ENCODE measurements at regions of chr17 and their contacts with region 1.

Region 1: GRCh38 chr17:7687908-7688807 is at the start of gene WRAP53:
- DNase-seq: peak; percentile 99
- H3K4me3 Mint-ChIP-seq: peak within 1 kb of the TSS; percentile 93
- H3K27ac Mint-ChIP-seq: peak within 1 kb of the TSS; percentile 97
- H3K4me1 Mint-ChIP-seq: peaks cover 24% of the 10 kb centered on the region
- H3K27me3 Mint-ChIP-seq: no peaks in the 10 kb centered on the region
- total RNA-seq, gene WRAP53: 33.8 and 35.0 TPM in 2 replicates

Region 2: GRCh38 chr17:7306911-7307686 is 381.1 kb before region 1 on chr17 and contains the start of gene EIF5A:
- intact Hi-C with region 1: loop called (anchors 1 kb)
- DNase-seq: peak; percentile 100
- H3K4me3 Mint-ChIP-seq: peak within 1 kb of the TSS; percentile 90
- H3K27ac Mint-ChIP-seq: peak within 1 kb of the TSS; percentile 99
- H3K4me1 Mint-ChIP-seq: peaks cover 40% of the 10 kb centered on the region
- H3K27me3 Mint-ChIP-seq: peaks cover 5% of the 10 kb centered on the region
- total RNA-seq, gene EIF5A: 1,303 and 1,327 TPM in 2 replicates

Region 3: GRCh38 chr17:7435221-7435675 is 252.9 kb before region 1 on chr17 and contains the start of gene TMEM102:
- intact Hi-C with region 1: loop called (anchors 1 kb)
- DNase-seq: peak; percentile 99
- H3K4me3 Mint-ChIP-seq: peak within 1 kb of the TSS; percentile 93
- H3K27ac Mint-ChIP-seq: peak within 1 kb of the TSS; percentile 98
- H3K4me1 Mint-ChIP-seq: peaks cover 31% of the 10 kb centered on the region
- H3K27me3 Mint-ChIP-seq: peaks cover 7% of the 10 kb centered on the region
- total RNA-seq, gene TMEM102: 12.8 and 12.9 TPM in 2 replicates

Region 4: DNA sequence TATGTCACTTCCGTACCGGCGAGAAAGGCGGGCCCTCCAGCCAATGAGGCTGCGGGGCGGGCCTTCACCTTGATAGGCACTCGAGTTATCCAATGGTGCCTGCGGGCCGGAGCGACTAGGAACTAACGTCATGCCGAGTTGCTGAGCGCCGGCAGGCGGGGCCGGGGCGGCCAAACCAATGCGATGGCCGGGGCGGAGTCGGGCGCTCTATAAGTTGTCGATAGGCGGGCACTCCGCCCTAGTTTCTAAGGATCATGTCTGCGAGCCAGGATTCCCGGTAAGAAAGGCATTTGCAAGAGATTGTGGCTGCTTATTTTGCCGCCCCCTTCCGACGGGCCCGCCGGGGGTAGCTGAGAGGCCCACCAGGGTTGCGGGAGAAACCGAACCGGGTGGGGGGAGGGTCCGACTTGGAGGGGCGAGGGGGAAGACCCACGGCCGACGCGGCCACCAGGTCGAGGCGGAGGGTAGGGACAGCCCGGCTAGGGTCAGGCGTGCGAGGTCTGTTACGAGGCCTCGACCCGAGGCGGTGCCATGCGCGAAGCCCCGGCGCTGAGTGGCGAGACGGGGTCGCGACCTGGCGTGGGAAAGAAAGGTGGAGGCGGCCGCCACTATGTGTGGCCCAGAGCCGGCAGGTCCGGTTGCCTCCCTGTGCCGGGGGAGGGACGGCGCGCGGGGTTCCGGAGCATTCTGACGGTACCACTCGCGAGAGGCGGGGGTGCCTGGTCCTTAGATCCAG is 115.4 kb before region 1 on chr17:
- intact Hi-C with region 1: loop called (anchors 1 kb)
- DNase-seq: peak; percentile 100
- H3K4me3 Mint-ChIP-seq: peak overlapping the region; percentile 95
- H3K27ac Mint-ChIP-seq: peak overlapping the region; percentile 100
- H3K4me1 Mint-ChIP-seq: peaks cover 55% of the 10 kb centered on the region
- H3K27me3 Mint-ChIP-seq: peaks cover 2% of the 10 kb centered on the region

Region 5: DNA sequence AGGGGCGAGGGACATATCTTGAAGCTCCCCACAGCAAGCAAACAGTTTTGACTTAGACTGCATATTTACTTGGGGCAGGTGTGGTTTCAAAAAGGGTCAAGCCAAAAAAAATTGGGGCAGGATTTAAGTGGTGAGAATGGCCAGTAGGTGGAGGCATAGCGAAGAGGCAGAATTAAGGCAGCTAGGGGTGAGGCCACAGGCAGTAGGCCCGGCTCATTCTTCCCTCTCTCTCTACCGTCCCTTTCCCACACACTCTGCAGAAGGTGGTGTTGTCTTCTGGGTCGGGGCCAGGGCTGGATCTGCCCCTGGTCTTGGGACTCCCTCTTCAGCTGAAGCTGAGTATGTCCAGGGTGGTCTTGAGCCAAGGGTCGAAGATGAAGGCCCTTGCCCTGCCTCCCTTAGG is 55.7 kb before region 1 on chr17:
- intact Hi-C with region 1: loop called (anchors 1 kb)
- DNase-seq: peak; percentile 84
- H3K4me3 Mint-ChIP-seq: no peak overlapping the region
- H3K27ac Mint-ChIP-seq: no peak overlapping the region
- H3K4me1 Mint-ChIP-seq: peaks cover 7% of the 10 kb centered on the region
- H3K27me3 Mint-ChIP-seq: peaks cover 5% of the 10 kb centered on the region

Region 6: GRCh38 chr17:7673239-7673638 is 14.9 kb before region 1 on chr17:
- intact Hi-C with region 1: no loop called
- DNase-seq: peak; percentile 77
- H3K4me3 Mint-ChIP-seq: no peak overlapping the region
- H3K27ac Mint-ChIP-seq: no peak overlapping the region
- H3K4me1 Mint-ChIP-seq: peaks cover 3% of the 10 kb centered on the region
- H3K27me3 Mint-ChIP-seq: no peaks in the 10 kb centered on the region

Region 7: GRCh38 chr17:7844292-7845154 is 156.4 kb after region 1 on chr17:
- intact Hi-C with region 1: loop called (anchors 2 kb)
- DNase-seq: peak; percentile 96
- H3K4me3 Mint-ChIP-seq: peak overlapping the region; percentile 99
- H3K27ac Mint-ChIP-seq: peak overlapping the region; percentile 100
- H3K4me1 Mint-ChIP-seq: peaks cover 37% of the 10 kb centered on the region
- H3K27me3 Mint-ChIP-seq: peaks cover 2% of the 10 kb centered on the region

Region 8: DNA sequence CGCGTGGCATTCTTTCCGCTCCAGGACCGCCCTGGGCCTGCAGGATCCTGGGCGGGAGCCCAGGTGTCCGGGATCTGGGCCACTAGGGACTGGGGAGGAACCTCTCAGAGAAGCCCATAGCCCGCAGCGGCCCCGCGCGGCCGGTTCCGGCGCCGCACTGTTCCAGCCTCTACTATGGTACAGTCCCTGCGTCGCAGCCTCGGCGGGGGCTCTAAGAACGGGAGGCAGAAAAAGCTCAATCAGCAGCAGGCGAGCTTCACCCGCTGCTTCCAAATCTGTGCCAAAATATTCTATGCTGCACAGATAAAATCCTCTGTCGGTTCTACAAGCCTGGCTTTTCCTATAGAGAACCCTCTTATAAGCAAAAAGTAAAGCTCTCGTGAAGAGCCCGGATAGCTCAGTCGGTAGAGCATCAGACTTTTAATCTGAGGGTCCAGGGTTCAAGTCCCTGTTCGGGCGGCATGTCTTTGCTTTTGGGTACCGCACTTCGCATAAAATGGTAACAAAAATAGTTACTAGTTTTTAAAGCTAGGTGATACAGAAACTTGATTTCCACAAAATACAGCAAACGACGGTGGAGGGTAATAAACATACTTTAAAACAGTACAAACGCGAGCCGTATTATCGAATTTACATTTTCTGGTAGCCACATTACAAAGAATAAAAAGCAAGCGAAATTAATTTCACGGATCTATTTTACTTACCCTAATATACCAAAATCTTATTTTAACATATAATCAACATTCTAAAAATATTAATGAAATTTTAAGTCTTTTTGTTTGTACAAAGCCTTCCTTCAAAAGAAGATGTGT is 430.8 kb after region 1 on chr17:
- intact Hi-C with region 1: loop called (anchors 5 kb)
- DNase-seq: peak; percentile 95
- H3K4me3 Mint-ChIP-seq: peak overlapping the region; percentile 91
- H3K27ac Mint-ChIP-seq: peak overlapping the region; percentile 92
- H3K4me1 Mint-ChIP-seq: peaks cover 51% of the 10 kb centered on the region
- H3K27me3 Mint-ChIP-seq: peaks cover 61% of the 10 kb centered on the region